MCF 10A (cell line): ENCODE measurements at regions of chr21 and their contacts with region 1.

Region 1: GRCh38 chr21:18265944-18266343 is 21.3 kb downstream of the CHODL start:
- DNase-seq: no peak
- H3K4me3 Mint-ChIP-seq: no peak overlapping the region
- H3K27ac Mint-ChIP-seq: no peak overlapping the region
- H3K4me1 Mint-ChIP-seq: no peaks in the 10 kb centered on the region
- H3K27me3 Mint-ChIP-seq: no peaks in the 10 kb centered on the region
- CTCF ChIP-seq: peak; percentile 31

Region 2: GRCh38 chr21:18164933-18165332 is 101.0 kb before region 1 on chr21:
- CTCF ChIA-PET with region 1: no interaction called
- POLR2A ChIA-PET with region 1: no interaction called
- intact Hi-C with region 1: loop called (anchors 2 kb)
- DNase-seq: peak; percentile 84
- H3K4me3 Mint-ChIP-seq: no peak overlapping the region
- H3K27ac Mint-ChIP-seq: no peak overlapping the region
- H3K4me1 Mint-ChIP-seq: peaks cover 6% of the 10 kb centered on the region
- H3K27me3 Mint-ChIP-seq: no peaks in the 10 kb centered on the region
- CTCF ChIP-seq: peak; percentile 37